Activated CD4-positive, alpha-beta T cell treated with anti-CD3 and anti-CD28 coated beads for 36 hours (primary cell): ENCODE measurements at regions of chr19 and their contacts with region 1.

Region 1: GRCh38 chr19:13952154-13953035 is at the start of gene DCAF15:
- DNase-seq: peak; percentile 100
- ATAC-seq: peak; percentile 99
- H3K4me3 Mint-ChIP-seq: peak within 1 kb of the TSS; percentile 88
- H3K27ac Mint-ChIP-seq: peak within 1 kb of the TSS; percentile 81
- H3K4me1 Mint-ChIP-seq: peaks cover 16% of the 10 kb centered on the region
- H3K27me3 Mint-ChIP-seq: no peaks in the 10 kb centered on the region
- total RNA-seq, gene DCAF15: 55.8 to 61.6 TPM

Region 2: GRCh38 chr19:12722566-12723380 is 1229.6 kb before region 1 on chr19:
- CTCF ChIA-PET with region 1: no interaction called
- POLR2A ChIA-PET with region 1: interaction called, 19 read pairs
- intact Hi-C with region 1: no loop called
- DNase-seq: peak; percentile 97
- ATAC-seq: peak; percentile 84
- H3K4me3 Mint-ChIP-seq: peak overlapping the region; percentile 99
- H3K27ac Mint-ChIP-seq: peak overlapping the region; percentile 90
- H3K4me1 Mint-ChIP-seq: peaks cover 35% of the 10 kb centered on the region
- H3K27me3 Mint-ChIP-seq: no peaks in the 10 kb centered on the region

Region 3: DNA sequence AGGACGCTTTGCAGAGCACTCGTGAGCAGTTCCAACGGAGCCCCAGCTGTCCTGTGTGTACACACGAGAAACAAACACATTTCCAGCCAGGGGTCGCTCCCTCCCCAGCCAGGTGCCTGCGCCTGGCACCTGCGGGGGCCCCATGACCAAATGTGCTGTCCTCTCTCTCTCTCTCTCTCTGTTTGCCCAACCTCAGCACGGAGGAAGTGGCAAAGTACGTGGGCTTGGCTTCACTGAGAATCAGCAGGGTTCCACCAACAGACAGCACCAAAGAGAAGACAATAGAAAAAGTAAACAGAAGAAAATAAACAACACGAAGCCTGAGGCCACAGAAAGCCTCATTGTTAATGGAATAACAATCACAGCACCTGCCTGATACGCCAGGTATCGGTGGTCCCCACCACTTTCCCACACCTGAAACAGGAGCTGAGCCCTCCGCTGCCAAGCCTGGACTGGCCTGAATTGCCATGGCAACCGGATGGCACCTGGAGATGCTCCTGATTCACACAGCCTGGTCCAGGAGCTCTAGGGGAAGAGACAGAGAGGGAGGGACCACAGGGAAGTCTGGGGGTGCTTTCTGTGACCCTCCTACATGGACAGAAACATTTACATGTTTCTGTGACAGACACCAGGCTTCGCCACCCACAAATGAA is 342.2 kb before region 1 on chr19:
- CTCF ChIA-PET with region 1: no interaction called
- POLR2A ChIA-PET with region 1: no interaction called
- intact Hi-C with region 1: no loop called
- DNase-seq: peak; percentile 37
- ATAC-seq: no peak
- H3K4me3 Mint-ChIP-seq: no peak overlapping the region
- H3K27ac Mint-ChIP-seq: no peak overlapping the region
- H3K4me1 Mint-ChIP-seq: peaks cover 6% of the 10 kb centered on the region
- H3K27me3 Mint-ChIP-seq: peaks cover 6% of the 10 kb centered on the region

Region 4: DNA sequence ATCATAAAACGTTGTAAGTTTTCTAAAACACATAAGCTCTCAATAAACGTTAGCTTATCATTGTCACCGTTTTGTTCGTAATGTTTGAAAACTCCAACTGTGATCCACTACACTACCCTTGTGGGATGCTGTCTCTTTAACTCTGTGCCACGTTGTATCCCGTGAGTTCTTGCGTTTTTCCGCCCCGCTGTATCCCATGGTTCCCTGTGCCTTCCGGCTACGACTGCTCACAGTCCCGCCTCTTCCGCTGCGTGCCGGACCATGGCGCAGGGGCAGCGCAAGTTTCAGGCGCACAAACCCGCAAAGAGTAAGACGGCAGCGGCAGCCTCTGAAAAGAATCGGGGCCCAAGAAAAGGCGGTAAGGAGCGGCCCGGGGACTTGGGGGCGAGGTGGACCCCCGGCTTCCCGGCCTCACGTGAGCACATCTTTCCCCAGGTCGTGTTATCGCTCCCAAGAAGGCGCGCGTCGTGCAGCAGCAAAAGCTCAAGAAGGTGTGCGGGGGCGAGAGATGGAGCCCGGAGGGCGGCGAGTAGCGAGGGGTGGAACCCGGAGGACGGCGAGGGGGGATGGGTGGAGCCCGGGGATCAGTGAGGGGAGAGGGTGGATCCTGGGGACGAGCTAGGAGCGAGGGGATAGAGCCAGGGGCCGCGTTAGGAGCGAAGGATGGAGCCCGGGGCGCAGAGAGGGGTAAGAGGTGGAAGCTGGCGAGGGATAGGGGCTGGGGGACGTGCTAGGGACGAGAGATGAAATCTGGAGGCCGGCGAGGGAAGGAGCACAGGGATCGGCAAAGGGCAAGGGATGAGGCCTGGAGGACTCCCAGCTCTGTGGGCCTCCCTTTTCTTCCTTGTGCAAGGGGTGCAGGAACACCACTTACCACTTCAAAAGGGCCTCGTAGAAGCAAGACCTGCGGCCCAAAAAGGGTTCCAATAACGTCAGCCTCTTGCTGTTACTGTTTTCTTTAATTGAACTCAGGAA is 177.9 kb before region 1 on chr19 and contains the start of gene C19orf53:
- CTCF ChIA-PET with region 1: no interaction called
- POLR2A ChIA-PET with region 1: no interaction called
- intact Hi-C with region 1: loop called in 1 of 2 experiments (anchors 1 kb)
- DNase-seq: peak; percentile 94
- ATAC-seq: peak; percentile 100
- H3K4me3 Mint-ChIP-seq: peak within 1 kb of the TSS; percentile 100
- H3K27ac Mint-ChIP-seq: peak within 1 kb of the TSS; percentile 95
- H3K4me1 Mint-ChIP-seq: peaks cover 17% of the 10 kb centered on the region
- H3K27me3 Mint-ChIP-seq: no peaks in the 10 kb centered on the region
- total RNA-seq, gene C19orf53: 115 to 142 TPM

Region 5: DNA sequence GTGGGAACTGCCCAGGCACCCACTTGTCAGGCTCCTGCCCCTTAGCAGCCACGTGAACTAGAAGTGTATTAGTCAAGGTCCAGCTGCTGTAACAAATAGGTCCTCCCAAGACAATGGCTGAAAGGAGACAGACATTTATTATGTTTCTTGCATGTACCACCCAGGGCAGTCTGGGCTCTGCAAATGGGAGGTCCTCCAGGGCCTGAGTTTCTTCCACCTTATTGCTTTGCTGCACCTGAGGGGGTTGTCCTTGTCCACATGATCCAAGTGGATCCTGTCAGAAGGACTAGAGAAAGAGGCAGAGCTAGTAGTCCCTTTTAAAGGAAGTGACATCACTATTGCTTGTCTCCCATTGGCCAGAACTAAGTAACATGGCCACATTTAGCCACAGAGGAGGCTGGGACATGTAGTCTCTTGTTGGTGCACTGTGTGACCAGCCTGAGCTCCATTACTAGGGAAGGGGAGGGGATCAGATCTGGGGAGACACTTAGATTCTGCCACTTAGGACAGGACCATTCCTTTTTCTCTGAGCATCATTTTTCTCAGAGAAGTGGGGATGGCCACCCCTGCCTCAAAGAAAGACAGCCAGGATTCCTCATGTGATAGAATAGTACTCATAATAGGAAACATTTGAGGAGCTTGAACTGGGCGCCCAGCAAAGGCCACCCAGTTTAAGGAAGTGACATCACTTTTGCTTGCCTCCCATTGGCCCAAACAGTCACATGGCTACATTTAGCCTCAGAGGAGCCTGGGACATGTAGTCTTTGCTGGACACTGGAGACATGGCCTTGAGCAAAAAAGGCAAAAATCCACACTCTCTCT is 31.2 kb before region 1 on chr19:
- CTCF ChIA-PET with region 1: interaction called, 4 read pairs
- POLR2A ChIA-PET with region 1: no interaction called
- intact Hi-C with region 1: loop called in 1 of 2 experiments (anchors 1 kb)
- DNase-seq: peak; percentile 61
- ATAC-seq: peak; percentile 94
- H3K4me3 Mint-ChIP-seq: no peak overlapping the region
- H3K27ac Mint-ChIP-seq: peak overlapping the region; percentile 19
- H3K4me1 Mint-ChIP-seq: no peaks in the 10 kb centered on the region
- H3K27me3 Mint-ChIP-seq: no peaks in the 10 kb centered on the region

Region 6: GRCh38 chr19:14048443-14049153 is 96.2 kb after region 1 on chr19:
- CTCF ChIA-PET with region 1: interaction called, 4 read pairs
- POLR2A ChIA-PET with region 1: no interaction called
- intact Hi-C with region 1: loop called in 1 of 2 experiments (anchors 5 kb)
- DNase-seq: peak; percentile 87
- ATAC-seq: peak; percentile 87
- H3K4me3 Mint-ChIP-seq: no peak overlapping the region
- H3K27ac Mint-ChIP-seq: peak overlapping the region; percentile 25
- H3K4me1 Mint-ChIP-seq: peaks cover 4% of the 10 kb centered on the region
- H3K27me3 Mint-ChIP-seq: no peaks in the 10 kb centered on the region

Region 7: GRCh38 chr19:14117668-14118164 is 165.3 kb after region 1 on chr19 and contains the start of gene PRKACA:
- CTCF ChIA-PET with region 1: no interaction called
- POLR2A ChIA-PET with region 1: no interaction called
- intact Hi-C with region 1: loop called in 1 of 2 experiments (anchors 1 kb)
- DNase-seq: peak; percentile 99
- ATAC-seq: peak; percentile 98
- H3K4me3 Mint-ChIP-seq: peak within 1 kb of the TSS; percentile 78
- H3K27ac Mint-ChIP-seq: peak within 1 kb of the TSS; percentile 77
- H3K4me1 Mint-ChIP-seq: peaks cover 41% of the 10 kb centered on the region
- H3K27me3 Mint-ChIP-seq: no peaks in the 10 kb centered on the region
- total RNA-seq, gene PRKACA: 58.1 to 68.7 TPM